Activated B cell treated with CpG ODN at 0.5 μM for 24 hours (primary cell): ENCODE measurements at regions of chr12 and their contacts with region 1.

Region 1: GRCh38 chr12:131949431-131950181 is at the start of gene EP400:
- DNase-seq: peak; percentile 92
- ATAC-seq: peak; percentile 97
- H3K4me3 Mint-ChIP-seq: peak within 1 kb of the TSS; percentile 93
- H3K27ac Mint-ChIP-seq: peak within 1 kb of the TSS; percentile 80
- H3K4me1 Mint-ChIP-seq: peaks cover 32% of the 10 kb centered on the region
- H3K27me3 Mint-ChIP-seq: no peaks in the 10 kb centered on the region
- CTCF ChIP-seq: no peak
- total RNA-seq, gene EP400: 57.8 and 65.6 TPM in 2 replicates

Region 2: DNA sequence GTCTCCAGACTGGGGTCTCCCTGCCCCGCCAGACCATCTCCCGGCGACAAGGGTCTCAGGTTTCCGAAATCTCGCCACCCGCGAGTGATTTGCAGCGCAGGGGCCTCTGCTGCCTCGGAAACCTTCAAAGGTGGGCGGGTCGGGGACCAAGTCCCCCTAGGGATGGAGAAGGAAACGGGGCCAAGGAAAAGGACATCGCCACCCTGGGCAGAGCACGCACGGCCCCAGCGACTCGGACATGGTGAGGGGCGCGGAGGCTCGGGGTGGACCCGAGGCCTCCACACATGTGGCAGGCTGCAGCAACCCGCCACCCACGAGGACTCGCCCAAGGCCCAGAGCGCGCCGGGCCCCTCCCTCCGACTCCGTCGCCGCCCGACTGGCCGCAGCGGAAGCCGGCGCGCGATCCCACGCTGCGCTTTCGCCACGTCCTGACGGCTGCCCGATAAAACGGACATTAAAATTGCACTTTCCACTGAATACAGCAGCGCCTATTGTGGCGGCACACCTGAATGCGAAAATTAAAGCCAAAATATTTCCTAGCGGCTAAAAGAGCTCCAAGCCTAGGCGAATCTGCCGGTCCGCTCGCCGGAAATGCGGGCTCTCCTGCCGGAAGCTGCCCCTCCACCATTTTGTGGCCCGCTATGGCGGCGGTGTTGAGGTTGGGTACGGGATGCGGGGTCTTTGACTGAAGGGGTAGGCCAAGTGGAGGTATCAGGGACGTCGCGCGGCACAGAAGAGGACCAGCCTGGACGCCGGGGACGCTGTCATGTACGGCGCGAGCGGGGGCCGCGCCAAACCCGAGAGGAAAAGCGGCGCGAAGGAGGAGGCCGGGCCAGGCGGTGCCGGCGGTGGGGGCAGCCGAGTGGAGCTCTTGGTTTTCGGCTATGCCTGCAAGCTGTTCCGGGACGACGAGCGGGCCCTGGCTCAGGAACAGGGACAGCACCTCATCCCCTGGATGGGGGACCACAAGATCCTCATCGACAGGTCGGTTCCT is 238.8 kb before region 1 on chr12 and contains the start of gene SFSWAP:
- CTCF ChIA-PET with region 1: no interaction called
- POLR2A ChIA-PET with region 1: interaction called, 6 read pairs
- intact Hi-C with region 1: loop called (anchors 1 kb)
- DNase-seq: peak; percentile 79
- ATAC-seq: peak; percentile 95
- H3K4me3 Mint-ChIP-seq: peak within 1 kb of the TSS; percentile 93
- H3K27ac Mint-ChIP-seq: peak within 1 kb of the TSS; percentile 98
- H3K4me1 Mint-ChIP-seq: peaks cover 31% of the 10 kb centered on the region
- H3K27me3 Mint-ChIP-seq: no peaks in the 10 kb centered on the region
- CTCF ChIP-seq: no peak
- total RNA-seq, gene SFSWAP: 75.1 and 88.0 TPM in 2 replicates

Region 3: GRCh38 chr12:131773582-131774221 is 175.9 kb before region 1 on chr12:
- CTCF ChIA-PET with region 1: no interaction called
- POLR2A ChIA-PET with region 1: interaction called, 4 read pairs
- intact Hi-C with region 1: loop called (anchors 1 kb)
- DNase-seq: peak; percentile 49
- ATAC-seq: peak; percentile 72
- H3K4me3 Mint-ChIP-seq: peak overlapping the region; percentile 84
- H3K27ac Mint-ChIP-seq: peak overlapping the region; percentile 98
- H3K4me1 Mint-ChIP-seq: peaks cover 76% of the 10 kb centered on the region
- H3K27me3 Mint-ChIP-seq: no peaks in the 10 kb centered on the region
- CTCF ChIP-seq: no peak

Region 4: DNA sequence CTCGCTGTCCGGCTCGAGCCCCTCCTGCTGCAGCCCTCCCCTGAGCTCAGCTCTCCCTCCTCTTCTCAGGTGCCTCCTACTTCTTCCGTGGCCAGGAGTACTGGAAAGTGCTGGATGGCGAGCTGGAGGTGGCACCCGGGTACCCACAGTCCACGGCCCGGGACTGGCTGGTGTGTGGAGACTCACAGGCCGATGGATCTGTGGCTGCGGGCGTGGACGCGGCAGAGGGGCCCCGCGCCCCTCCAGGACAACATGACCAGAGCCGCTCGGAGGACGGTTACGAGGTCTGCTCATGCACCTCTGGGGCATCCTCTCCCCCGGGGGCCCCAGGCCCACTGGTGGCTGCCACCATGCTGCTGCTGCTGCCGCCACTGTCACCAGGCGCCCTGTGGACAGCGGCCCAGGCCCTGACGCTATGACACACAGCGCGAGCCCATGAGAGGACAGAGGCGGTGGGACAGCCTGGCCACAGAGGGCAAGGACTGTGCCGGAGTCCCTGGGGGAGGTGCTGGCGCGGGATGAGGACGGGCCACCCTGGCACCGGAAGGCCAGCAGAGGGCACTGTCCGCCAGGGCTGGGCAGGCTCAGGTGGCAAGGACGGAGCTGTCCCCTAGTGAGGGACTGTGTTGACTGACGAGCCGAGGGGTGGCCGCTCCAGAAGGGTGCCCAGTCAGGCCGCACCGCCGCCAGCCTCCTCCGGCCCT is 98.6 kb before region 1 on chr12:
- CTCF ChIA-PET with region 1: no interaction called
- POLR2A ChIA-PET with region 1: interaction called, 3 read pairs
- intact Hi-C with region 1: loop called (anchors 1 kb)
- DNase-seq: peak; percentile 42
- ATAC-seq: peak; percentile 59
- H3K4me3 Mint-ChIP-seq: no peak overlapping the region
- H3K27ac Mint-ChIP-seq: no peak overlapping the region
- H3K4me1 Mint-ChIP-seq: peaks cover 16% of the 10 kb centered on the region
- H3K27me3 Mint-ChIP-seq: no peaks in the 10 kb centered on the region
- CTCF ChIP-seq: no peak

Region 5: GRCh38 chr12:131894313-131894860 is 55.2 kb before region 1 on chr12 and contains the start of gene ULK1:
- CTCF ChIA-PET with region 1: no interaction called
- POLR2A ChIA-PET with region 1: interaction called, 3 read pairs
- intact Hi-C with region 1: loop called (anchors 1 kb)
- DNase-seq: peak; percentile 97
- ATAC-seq: peak; percentile 86
- H3K4me3 Mint-ChIP-seq: peak within 1 kb of the TSS; percentile 82
- H3K27ac Mint-ChIP-seq: peak within 1 kb of the TSS; percentile 46
- H3K4me1 Mint-ChIP-seq: peaks cover 22% of the 10 kb centered on the region
- H3K27me3 Mint-ChIP-seq: peaks cover 3% of the 10 kb centered on the region
- CTCF ChIP-seq: no peak
- total RNA-seq, gene ULK1: 20.1 and 27.0 TPM in 2 replicates

Region 6: GRCh38 chr12:131923260-131923659 is 26.3 kb before region 1 on chr12:
- CTCF ChIA-PET with region 1: no interaction called
- POLR2A ChIA-PET with region 1: interaction called, 23 read pairs
- intact Hi-C with region 1: loop called (anchors 1 kb)
- DNase-seq: peak; percentile 68
- ATAC-seq: peak; percentile 83
- H3K4me3 Mint-ChIP-seq: peak overlapping the region; percentile 55
- H3K27ac Mint-ChIP-seq: peak overlapping the region; percentile 71
- H3K4me1 Mint-ChIP-seq: peaks cover 37% of the 10 kb centered on the region
- H3K27me3 Mint-ChIP-seq: no peaks in the 10 kb centered on the region
- CTCF ChIP-seq: no peak

Region 7: GRCh38 chr12:131939007-131939406 is 10.6 kb before region 1 on chr12:
- CTCF ChIA-PET with region 1: no interaction called
- POLR2A ChIA-PET with region 1: no interaction called
- intact Hi-C with region 1: no loop called
- DNase-seq: no peak
- ATAC-seq: no peak
- H3K4me3 Mint-ChIP-seq: no peak overlapping the region
- H3K27ac Mint-ChIP-seq: no peak overlapping the region
- H3K4me1 Mint-ChIP-seq: no peaks in the 10 kb centered on the region
- H3K27me3 Mint-ChIP-seq: no peaks in the 10 kb centered on the region
- CTCF ChIP-seq: no peak

Region 8: GRCh38 chr12:132275110-132275531 is 325.5 kb after region 1 on chr12:
- CTCF ChIA-PET with region 1: no interaction called
- POLR2A ChIA-PET with region 1: no interaction called
- intact Hi-C with region 1: no loop called
- DNase-seq: no peak
- ATAC-seq: no peak
- H3K4me3 Mint-ChIP-seq: no peak overlapping the region
- H3K27ac Mint-ChIP-seq: no peak overlapping the region
- H3K4me1 Mint-ChIP-seq: no peaks in the 10 kb centered on the region
- H3K27me3 Mint-ChIP-seq: peaks cover 15% of the 10 kb centered on the region
- CTCF ChIP-seq: no peak